ENCODE measurements at regions of chr19 and their contacts with region 1.

Region 1: GRCh38 chr19:58305065-58305931 is at the start of gene ERVK3-1:
- DNase-seq: peak; percentile 98
- ATAC-seq: peak; percentile 98
- H3K4me3 ChIP-seq: peak within 1 kb of the TSS; percentile 39 to 94 (median 88)
- H3K4me3 Mint-ChIP-seq: peak within 1 kb of the TSS; percentile 97
- H3K27ac ChIP-seq: peak within 1 kb of the TSS; percentile 85 to 93
- H3K27ac Mint-ChIP-seq: peak within 1 kb of the TSS; percentile 97
- H3K4me1 ChIP-seq: peaks cover 15 to 18% of the 10 kb centered on the region in 2 donors
- H3K4me1 Mint-ChIP-seq: peaks cover 36% of the 10 kb centered on the region
- H3K27me3 ChIP-seq: no peaks in the 10 kb centered on the region
- H3K27me3 Mint-ChIP-seq: no peaks in the 10 kb centered on the region
- CTCF ChIP-seq: no peak
- total RNA-seq, gene ERVK3-1: 79.0 and 80.2 TPM in 2 replicates

Region 2: GRCh38 chr19:56671613-56671994 is 1633.7 kb before region 1 on chr19 and contains the start of gene ZNF835:
- CTCF ChIA-PET with region 1: no interaction called
- POLR2A ChIA-PET with region 1: no interaction called
- intact Hi-C with region 1: loop called (anchors 5 kb)
- DNase-seq: peak; percentile 92
- ATAC-seq: peak; percentile 98
- H3K4me3 ChIP-seq: peak within 1 kb of the TSS; percentile 27 to 83 (median 72)
- H3K4me3 Mint-ChIP-seq: peak within 1 kb of the TSS; percentile 98
- H3K27ac ChIP-seq: no peak within 1 kb of the TSS
- H3K27ac Mint-ChIP-seq: peak within 1 kb of the TSS; percentile 89
- H3K4me1 ChIP-seq: peaks cover 9 to 18% of the 10 kb centered on the region in 2 donors
- H3K4me1 Mint-ChIP-seq: peaks cover 14% of the 10 kb centered on the region
- H3K27me3 ChIP-seq: no peaks in the 10 kb centered on the region
- H3K27me3 Mint-ChIP-seq: no peaks in the 10 kb centered on the region
- CTCF ChIP-seq: peak; percentile 33
- total RNA-seq, gene ZNF835: 7.0 and 10.1 TPM in 2 replicates

Region 3: GRCh38 chr19:58278157-58279041 is 26.9 kb before region 1 on chr19 and contains the start of gene ZNF8:
- CTCF ChIA-PET with region 1: no interaction called
- POLR2A ChIA-PET with region 1: interaction called, 9 read pairs
- intact Hi-C with region 1: loop called (anchors 1 kb)
- DNase-seq: peak; percentile 96
- ATAC-seq: peak; percentile 98
- H3K4me3 ChIP-seq: peak within 1 kb of the TSS; percentile 72 to 98 (median 95)
- H3K4me3 Mint-ChIP-seq: peak within 1 kb of the TSS; percentile 91
- H3K27ac ChIP-seq: peak within 1 kb of the TSS; percentile 73 to 86
- H3K27ac Mint-ChIP-seq: peak within 1 kb of the TSS; percentile 93
- H3K4me1 ChIP-seq: peaks cover 13 to 19% of the 10 kb centered on the region in 2 donors
- H3K4me1 Mint-ChIP-seq: peaks cover 38% of the 10 kb centered on the region
- H3K27me3 ChIP-seq: no peaks in the 10 kb centered on the region
- H3K27me3 Mint-ChIP-seq: no peaks in the 10 kb centered on the region
- CTCF ChIP-seq: no peak
- total RNA-seq, gene ZNF8: 7.9 and 8.0 TPM in 2 replicates

Region 4: GRCh38 chr19:58380722-58381466 is 75.6 kb after region 1 on chr19 and contains the start of gene ZNF837:
- CTCF ChIA-PET with region 1: no interaction called
- POLR2A ChIA-PET with region 1: interaction called, 9 read pairs
- intact Hi-C with region 1: loop called (anchors 1 kb)
- DNase-seq: peak; percentile 100
- ATAC-seq: peak; percentile 86
- H3K4me3 ChIP-seq: peak within 1 kb of the TSS; percentile 22 to 78 (median 71)
- H3K4me3 Mint-ChIP-seq: peak within 1 kb of the TSS; percentile 92
- H3K27ac ChIP-seq: peak within 1 kb of the TSS; percentile 89 to 97
- H3K27ac Mint-ChIP-seq: peak within 1 kb of the TSS; percentile 95
- H3K4me1 ChIP-seq: peaks cover 27 to 35% of the 10 kb centered on the region in 2 donors
- H3K4me1 Mint-ChIP-seq: peaks cover 32% of the 10 kb centered on the region
- H3K27me3 ChIP-seq: no peaks in the 10 kb centered on the region
- H3K27me3 Mint-ChIP-seq: no peaks in the 10 kb centered on the region
- CTCF ChIP-seq: no peak
- total RNA-seq, gene ZNF837: 3.1 and 4.2 TPM in 2 replicates

Region 5: DNA sequence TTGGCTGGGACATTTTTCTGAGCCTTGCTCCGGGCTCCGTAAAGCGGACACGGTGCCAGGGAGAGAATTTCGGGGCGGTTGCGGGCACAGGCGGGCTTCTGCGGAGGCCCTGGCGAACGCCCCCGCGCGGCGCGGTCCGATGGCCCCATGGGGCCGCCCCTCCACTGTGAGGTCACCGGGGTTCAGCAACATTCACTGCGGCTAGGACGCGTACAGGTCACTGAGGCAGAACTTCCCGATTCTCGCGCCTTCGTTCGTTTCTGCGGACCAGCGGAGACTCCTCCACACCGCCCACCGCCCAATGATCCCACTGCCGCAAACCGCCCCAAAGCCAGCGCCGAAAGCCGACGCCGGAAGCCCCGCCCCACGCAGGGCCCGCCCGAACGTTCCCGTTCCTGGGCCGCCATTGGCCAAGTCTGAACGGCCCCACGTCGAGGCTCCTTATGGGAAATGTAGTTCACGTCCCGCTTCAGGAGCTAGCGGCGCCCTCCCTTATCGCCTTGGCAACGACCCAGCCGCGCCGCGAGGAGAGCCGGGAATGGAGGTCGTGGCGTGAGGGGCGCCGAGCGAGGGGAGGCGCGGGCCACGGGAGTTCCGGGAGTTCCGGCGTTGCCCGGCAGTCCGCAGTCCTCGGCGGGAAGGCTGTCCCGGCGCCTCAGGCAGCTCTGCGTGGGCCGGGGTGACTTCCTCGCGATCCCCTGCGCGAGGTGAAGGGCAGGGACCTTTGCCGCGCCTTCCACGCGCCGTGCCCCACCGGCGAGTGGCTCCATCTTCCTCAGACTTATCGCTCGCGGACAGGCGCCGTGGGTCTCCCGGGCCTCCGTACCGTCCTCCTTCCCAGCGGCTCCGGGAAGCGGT is 103.1 kb after region 1 on chr19 and contains the start of gene ZNF584:
- CTCF ChIA-PET with region 1: no interaction called
- POLR2A ChIA-PET with region 1: no interaction called
- intact Hi-C with region 1: loop called (anchors 1 kb)
- DNase-seq: peak; percentile 96
- ATAC-seq: peak; percentile 96
- H3K4me3 ChIP-seq: peak within 1 kb of the TSS; percentile 58 to 93 (median 83)
- H3K4me3 Mint-ChIP-seq: peak within 1 kb of the TSS; percentile 97
- H3K27ac ChIP-seq: peak within 1 kb of the TSS; percentile 82 to 93
- H3K27ac Mint-ChIP-seq: peak within 1 kb of the TSS; percentile 98
- H3K4me1 ChIP-seq: peaks cover 11 to 20% of the 10 kb centered on the region in 2 donors
- H3K4me1 Mint-ChIP-seq: peaks cover 33% of the 10 kb centered on the region
- H3K27me3 ChIP-seq: no peaks in the 10 kb centered on the region
- H3K27me3 Mint-ChIP-seq: no peaks in the 10 kb centered on the region
- CTCF ChIP-seq: no peak
- total RNA-seq, gene ZNF584: 12.3 and 14.0 TPM in 2 replicates

Region 6: GRCh38 chr19:58466760-58467589 is 161.7 kb after region 1 on chr19 and contains the start of gene ZNF324:
- CTCF ChIA-PET with region 1: interaction called, 3 read pairs
- POLR2A ChIA-PET with region 1: no interaction called
- intact Hi-C with region 1: loop called (anchors 2 kb)
- DNase-seq: peak; percentile 97
- ATAC-seq: peak; percentile 96
- H3K4me3 ChIP-seq: peak within 1 kb of the TSS; percentile 34 to 91 (median 89)
- H3K4me3 Mint-ChIP-seq: peak within 1 kb of the TSS; percentile 85
- H3K27ac ChIP-seq: peak within 1 kb of the TSS; percentile 18 to 90
- H3K27ac Mint-ChIP-seq: peak within 1 kb of the TSS; percentile 85
- H3K4me1 ChIP-seq: peaks cover 8 to 25% of the 10 kb centered on the region in 2 donors
- H3K4me1 Mint-ChIP-seq: peaks cover 26% of the 10 kb centered on the region
- H3K27me3 ChIP-seq: no peaks in the 10 kb centered on the region
- H3K27me3 Mint-ChIP-seq: no peaks in the 10 kb centered on the region
- CTCF ChIP-seq: no peak
- total RNA-seq, gene ZNF324: 17.6 and 21.0 TPM in 2 replicates